ENCODE measurements at regions of chr10 and their contacts with region 1.

Region 1: GRCh38 chr10:84613336-84614021 is 285.1 kb downstream of the CCSER2 start:
- DNase-seq: peak; percentile 64 to 75
- H3K4me3 ChIP-seq: peak overlapping the region in 2 of 4 experiments; percentile 5 to 37; a peak in 2 of 8 replicates
- H3K27ac ChIP-seq: no peak overlapping the region
- H3K4me1 ChIP-seq: peaks cover 0 to 6% (median 3%) of the 10 kb centered on the region in 4 experiments; a peak in 4 of 7 replicates
- H3K27me3 ChIP-seq: no peaks in the 10 kb centered on the region; a peak in 1 of 7 replicates
- CTCF ChIP-seq: peak; percentile 67 to 87 (median 76)
- EP300 ChIP-seq: no peak
- POLR2A ChIP-seq: no peak
- RAD21 ChIP-seq: peak; percentile 90 to 91

Region 2: GRCh38 chr10:84548869-84549268 is 64.6 kb before region 1 on chr10:
- CTCF ChIA-PET with region 1: interaction called, 140 read pairs
- POLR2A ChIA-PET with region 1: no interaction called
- DNase-seq: peak in 1 of 2 experiments; percentile 63
- H3K4me3 ChIP-seq: no peak overlapping the region
- H3K27ac ChIP-seq: no peak overlapping the region
- H3K4me1 ChIP-seq: no peaks in the 10 kb centered on the region
- H3K27me3 ChIP-seq: no peaks in the 10 kb centered on the region
- CTCF ChIP-seq: peak; percentile 69 to 94 (median 86)
- EP300 ChIP-seq: no peak
- POLR2A ChIP-seq: no peak
- RAD21 ChIP-seq: peak; percentile 44 to 50

Region 3: DNA sequence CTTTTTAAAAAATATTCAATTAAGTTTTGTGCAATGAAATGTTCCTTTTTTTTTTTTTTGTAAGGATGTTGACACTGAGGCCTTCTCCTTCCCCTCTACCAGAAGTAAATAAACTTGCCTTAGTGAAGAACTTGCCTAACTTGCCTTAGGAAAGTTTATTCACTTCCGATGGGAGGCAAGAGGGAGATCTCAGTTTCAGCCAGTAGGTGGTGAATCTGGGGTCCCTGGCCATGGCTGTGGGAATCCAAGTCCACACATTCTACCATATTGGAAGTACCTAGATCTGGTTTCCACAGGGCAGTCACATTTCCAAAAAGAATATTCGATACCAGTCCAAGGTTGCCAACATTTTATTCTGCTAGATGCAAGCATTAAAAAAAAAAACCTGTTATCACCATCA is 14.2 kb before region 1 on chr10:
- CTCF ChIA-PET with region 1: interaction called, 23 read pairs
- POLR2A ChIA-PET with region 1: no interaction called
- DNase-seq: no peak
- H3K4me3 ChIP-seq: no peak overlapping the region
- H3K27ac ChIP-seq: no peak overlapping the region
- H3K4me1 ChIP-seq: peaks cover 0 to 7% (median 4%) of the 10 kb centered on the region in 4 experiments; a peak in 4 of 7 replicates
- H3K27me3 ChIP-seq: peaks cover 7 to 25% (median 21%) of the 10 kb centered on the region in 4 experiments
- CTCF ChIP-seq: peak; percentile 44 to 51 (median 50)
- EP300 ChIP-seq: no peak
- POLR2A ChIP-seq: no peak
- RAD21 ChIP-seq: peak in 1 of 2 experiments; percentile 28; a peak in 2 of 4 replicates

Region 4: GRCh38 chr10:84660450-84661159 is 47.1 kb after region 1 on chr10:
- CTCF ChIA-PET with region 1: interaction called, 39 read pairs
- POLR2A ChIA-PET with region 1: no interaction called
- DNase-seq: no peak
- H3K4me3 ChIP-seq: no peak overlapping the region
- H3K27ac ChIP-seq: no peak overlapping the region
- H3K4me1 ChIP-seq: peaks cover 0 to 4% (median 0%) of the 10 kb centered on the region in 4 experiments; a peak in 1 of 7 replicates
- H3K27me3 ChIP-seq: no peaks in the 10 kb centered on the region
- CTCF ChIP-seq: no peak
- EP300 ChIP-seq: no peak
- POLR2A ChIP-seq: no peak
- RAD21 ChIP-seq: no peak

Region 5: DNA sequence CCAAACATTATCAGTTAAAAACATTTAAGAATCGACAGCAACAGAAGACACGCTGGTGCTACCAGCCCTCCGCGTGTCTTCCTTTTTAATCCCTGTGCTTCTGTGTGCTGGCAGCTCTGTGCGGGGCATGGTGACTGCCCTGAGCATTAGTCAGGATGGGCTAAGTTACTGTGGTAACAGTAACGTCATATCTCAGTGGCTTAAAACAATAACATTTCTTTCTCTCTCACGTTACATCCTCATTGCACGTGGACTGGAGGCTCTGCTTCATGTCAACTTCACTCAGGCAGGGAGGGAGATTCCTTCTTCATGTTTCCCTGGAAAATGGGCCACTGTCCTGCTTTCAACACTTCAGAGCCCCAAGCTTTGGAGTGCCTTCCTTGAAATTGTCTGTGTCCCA is 93.4 kb after region 1 on chr10:
- CTCF ChIA-PET with region 1: interaction called, 12 read pairs
- POLR2A ChIA-PET with region 1: no interaction called
- DNase-seq: no peak
- H3K4me3 ChIP-seq: no peak overlapping the region
- H3K27ac ChIP-seq: no peak overlapping the region
- H3K4me1 ChIP-seq: no peaks in the 10 kb centered on the region
- H3K27me3 ChIP-seq: no peaks in the 10 kb centered on the region
- CTCF ChIP-seq: no peak
- EP300 ChIP-seq: no peak
- POLR2A ChIP-seq: no peak
- RAD21 ChIP-seq: no peak

Region 6: GRCh38 chr10:84765656-84766055 is 152.2 kb after region 1 on chr10:
- CTCF ChIA-PET with region 1: interaction called, 15 read pairs
- POLR2A ChIA-PET with region 1: no interaction called
- DNase-seq: no peak
- H3K4me3 ChIP-seq: no peak overlapping the region
- H3K27ac ChIP-seq: no peak overlapping the region
- H3K4me1 ChIP-seq: peaks cover 0 to 4% (median 2%) of the 10 kb centered on the region in 4 experiments; a peak in 2 of 7 replicates
- H3K27me3 ChIP-seq: no peaks in the 10 kb centered on the region
- CTCF ChIP-seq: no peak
- EP300 ChIP-seq: no peak
- POLR2A ChIP-seq: no peak
- RAD21 ChIP-seq: no peak

Measured in H1 (cell line).